ENCODE measurements at regions of chr17 and their contacts with region 1.

Region 1: GRCh38 chr17:32783602-32784001 is 93.3 kb downstream of the MYO1D start:
- DNase-seq: no peak
- ATAC-seq: peak; percentile 62 to 68

Region 2: GRCh38 chr17:32877164-32877764 is 93.7 kb after region 1 on chr17:
- intact Hi-C with region 1: loop called (anchors 1 to 5 kb)
- DNase-seq: peak; percentile 94
- ATAC-seq: peak; percentile 98 to 99

Region 3: DNA sequence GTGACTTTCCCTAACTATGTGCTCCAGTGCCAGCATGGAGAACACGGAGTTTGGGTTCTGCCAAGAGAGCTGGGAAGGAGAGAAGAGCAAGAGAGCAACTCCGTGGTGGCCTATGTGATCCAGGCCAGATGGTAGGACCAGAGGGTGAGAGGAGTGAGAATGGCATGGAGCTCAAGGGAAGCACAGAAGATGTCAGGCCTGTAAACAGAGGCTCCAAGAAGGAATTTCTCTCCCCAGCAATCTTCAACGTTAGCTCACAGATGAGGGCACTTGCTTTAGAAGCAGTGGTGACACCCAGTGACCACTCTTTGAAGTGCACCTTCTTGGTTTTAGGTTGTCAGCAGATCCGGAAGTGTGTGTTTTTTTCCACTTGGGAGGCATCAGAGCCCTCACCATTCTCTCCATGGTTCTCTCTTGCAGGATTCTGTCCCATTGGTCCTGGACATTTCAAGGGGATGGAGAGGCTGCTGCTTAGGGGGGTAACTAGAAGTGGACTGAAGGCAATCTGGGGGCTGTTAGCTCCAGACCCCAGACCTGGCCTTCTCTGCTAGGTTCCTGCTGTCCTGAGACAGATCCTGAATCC is 126.3 kb after region 1 on chr17:
- intact Hi-C with region 1: loop called (anchors 1 to 10 kb)
- DNase-seq: peak; percentile 73
- ATAC-seq: peak; percentile 71 to 72

Region 4: GRCh38 chr17:32997753-32998632 is 214.4 kb after region 1 on chr17:
- intact Hi-C with region 1: loop called in 1 of 2 experiments (anchors 10 kb)
- DNase-seq: peak; percentile 82
- ATAC-seq: peak; percentile 61 to 85